B cell (primary cell): ENCODE measurements at regions of chr1 and their contacts with region 1.

Region 1: DNA sequence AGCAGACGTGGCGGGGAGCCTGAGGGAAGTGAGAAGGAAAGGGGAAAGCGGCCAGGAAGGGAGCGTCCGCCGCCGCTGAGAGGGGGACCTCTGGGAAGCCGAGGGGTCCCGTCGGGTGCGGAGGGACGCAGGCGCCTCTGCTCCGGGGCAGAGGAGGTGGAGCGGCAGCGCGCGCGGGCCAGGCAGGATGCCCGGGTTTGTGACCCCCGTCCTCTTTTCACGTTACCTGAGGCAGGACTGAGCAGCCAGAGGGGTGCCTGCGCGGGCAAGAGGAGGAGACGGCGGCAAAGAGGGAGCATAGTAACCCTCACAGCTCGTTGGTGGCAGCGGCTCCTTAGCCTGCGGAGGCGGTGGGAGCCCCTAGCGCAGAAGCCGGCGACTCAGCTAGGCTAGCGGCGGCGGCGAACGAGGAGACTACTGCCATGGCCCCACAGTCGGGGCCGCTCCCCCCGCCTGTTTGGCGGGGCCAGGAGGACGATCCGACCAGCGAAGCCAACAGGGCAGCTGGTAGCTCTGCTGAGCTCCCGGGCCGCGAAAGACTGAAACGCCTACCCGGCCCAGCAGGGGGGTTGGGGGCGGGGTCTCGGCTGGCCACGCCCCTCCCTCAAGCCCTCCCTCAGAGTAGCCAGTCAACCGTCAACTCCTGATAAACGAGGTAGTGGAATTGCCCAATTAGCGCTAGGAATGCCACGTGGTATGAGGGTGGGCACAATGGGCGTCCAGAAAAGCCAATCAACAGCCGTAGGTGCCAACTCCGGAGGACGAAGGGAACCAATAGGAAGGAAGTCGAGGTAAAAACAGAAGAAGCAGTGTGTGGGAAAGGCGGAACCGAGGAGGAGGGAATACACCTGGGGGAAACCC is at the start of gene TESK2:
- DNase-seq: peak; percentile 99
- ATAC-seq: peak; percentile 88
- H3K4me3 ChIP-seq: peak within 1 kb of the TSS; percentile 67 to 88 (median 83)
- H3K4me3 Mint-ChIP-seq: no peak within 1 kb of the TSS
- H3K27ac ChIP-seq: peak within 1 kb of the TSS; percentile 60 to 80
- H3K27ac Mint-ChIP-seq: no peak within 1 kb of the TSS
- H3K4me1 ChIP-seq: peaks cover 28% of the 10 kb centered on the region in 2 donors
- H3K4me1 Mint-ChIP-seq: peaks cover 22% of the 10 kb centered on the region
- H3K27me3 ChIP-seq: no peaks in the 10 kb centered on the region
- H3K27me3 Mint-ChIP-seq: no peaks in the 10 kb centered on the region
- CTCF ChIP-seq: peak; percentile 7
- total RNA-seq, gene TESK2: 26.2 and 27.0 TPM in 2 replicates

Region 2: GRCh38 chr1:44354840-44355581 is 1135.8 kb before region 1 on chr1 and contains the start of gene ERI3:
- CTCF ChIA-PET with region 1: no interaction called
- POLR2A ChIA-PET with region 1: no interaction called
- intact Hi-C with region 1: loop called (anchors 5 kb)
- DNase-seq: peak; percentile 96
- ATAC-seq: peak; percentile 100
- H3K4me3 ChIP-seq: peak within 1 kb of the TSS; percentile 12 to 88 (median 69)
- H3K4me3 Mint-ChIP-seq: peak within 1 kb of the TSS; percentile 92
- H3K27ac ChIP-seq: peak within 1 kb of the TSS in 1 of 2 donors; percentile 80
- H3K27ac Mint-ChIP-seq: peak within 1 kb of the TSS; percentile 92
- H3K4me1 ChIP-seq: peaks cover 7 to 14% of the 10 kb centered on the region in 2 donors
- H3K4me1 Mint-ChIP-seq: peaks cover 27% of the 10 kb centered on the region
- H3K27me3 ChIP-seq: no peaks in the 10 kb centered on the region
- H3K27me3 Mint-ChIP-seq: no peaks in the 10 kb centered on the region
- CTCF ChIP-seq: no peak
- total RNA-seq, gene ERI3: 36.3 and 37.5 TPM in 2 replicates

Region 3: GRCh38 chr1:44777979-44778635 is 712.7 kb before region 1 on chr1:
- CTCF ChIA-PET with region 1: no interaction called
- POLR2A ChIA-PET with region 1: no interaction called
- intact Hi-C with region 1: no loop called
- DNase-seq: no peak
- ATAC-seq: no peak
- H3K4me3 ChIP-seq: no peak overlapping the region
- H3K4me3 Mint-ChIP-seq: no peak overlapping the region
- H3K27ac ChIP-seq: no peak overlapping the region
- H3K27ac Mint-ChIP-seq: peak overlapping the region; percentile 94
- H3K4me1 ChIP-seq: peaks cover 14 to 29% of the 10 kb centered on the region in 2 donors
- H3K4me1 Mint-ChIP-seq: peaks cover 40% of the 10 kb centered on the region
- H3K27me3 ChIP-seq: no peaks in the 10 kb centered on the region
- H3K27me3 Mint-ChIP-seq: no peaks in the 10 kb centered on the region
- CTCF ChIP-seq: no peak

Region 4: GRCh38 chr1:44799770-44800584 is 690.9 kb before region 1 on chr1 and contains the start of gene PLK3:
- CTCF ChIA-PET with region 1: interaction called, 3 read pairs
- POLR2A ChIA-PET with region 1: no interaction called
- intact Hi-C with region 1: loop called (anchors 2 kb)
- DNase-seq: peak; percentile 99
- ATAC-seq: peak; percentile 89
- H3K4me3 ChIP-seq: peak within 1 kb of the TSS; percentile 61 to 88 (median 85)
- H3K4me3 Mint-ChIP-seq: peak within 1 kb of the TSS; percentile 99
- H3K27ac ChIP-seq: peak within 1 kb of the TSS; percentile 84 to 93
- H3K27ac Mint-ChIP-seq: peak within 1 kb of the TSS; percentile 100
- H3K4me1 ChIP-seq: peaks cover 16 to 38% of the 10 kb centered on the region in 2 donors
- H3K4me1 Mint-ChIP-seq: peaks cover 33% of the 10 kb centered on the region
- H3K27me3 ChIP-seq: no peaks in the 10 kb centered on the region
- H3K27me3 Mint-ChIP-seq: no peaks in the 10 kb centered on the region
- CTCF ChIP-seq: peak; percentile 85
- total RNA-seq, gene PLK3: 30.1 and 35.9 TPM in 2 replicates

Region 5: GRCh38 chr1:45339789-45340570 is 150.9 kb before region 1 on chr1 and contains the starts of genes MUTYH and TOE1:
- CTCF ChIA-PET with region 1: interaction called, 74 read pairs
- POLR2A ChIA-PET with region 1: interaction called, 33 read pairs
- intact Hi-C with region 1: loop called (anchors 1 kb)
- DNase-seq: peak; percentile 92
- ATAC-seq: peak; percentile 88
- H3K4me3 ChIP-seq: peak within 1 kb of the TSS; percentile 83 to 97 (median 86)
- H3K4me3 Mint-ChIP-seq: peak within 1 kb of the TSS; percentile 91
- H3K27ac ChIP-seq: peak within 1 kb of the TSS; percentile 96
- H3K27ac Mint-ChIP-seq: peak within 1 kb of the TSS; percentile 100
- H3K4me1 ChIP-seq: peaks cover 20 to 33% of the 10 kb centered on the region in 2 donors
- H3K4me1 Mint-ChIP-seq: peaks cover 38% of the 10 kb centered on the region
- H3K27me3 ChIP-seq: no peaks in the 10 kb centered on the region
- H3K27me3 Mint-ChIP-seq: no peaks in the 10 kb centered on the region
- CTCF ChIP-seq: no peak
- total RNA-seq, gene MUTYH: 68.1 and 68.5 TPM in 2 replicates
- total RNA-seq, gene TOE1: 21.9 and 24.7 TPM in 2 replicates

Region 6: DNA sequence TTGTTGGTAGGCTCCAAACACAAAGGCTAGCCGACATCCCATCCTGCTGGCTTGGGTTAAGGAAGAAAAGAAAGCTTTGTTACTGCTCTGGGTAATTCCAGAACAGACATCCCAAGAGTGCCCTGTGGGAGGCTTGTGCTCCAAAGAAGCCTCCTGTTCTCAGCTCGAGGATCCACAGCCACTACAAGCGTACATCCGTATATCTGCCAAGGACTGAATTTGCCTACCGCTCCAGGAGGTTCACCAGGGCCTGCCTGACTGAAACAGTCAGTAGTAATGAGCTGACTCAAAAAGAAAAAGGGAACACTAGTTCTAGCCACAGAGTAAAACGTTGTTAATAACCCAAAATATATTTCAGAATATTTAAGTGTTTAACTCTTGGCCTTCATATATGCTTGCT is 125.8 kb before region 1 on chr1:
- CTCF ChIA-PET with region 1: interaction called, 478 read pairs
- POLR2A ChIA-PET with region 1: interaction called, 22 read pairs
- intact Hi-C with region 1: no loop called
- DNase-seq: no peak
- ATAC-seq: no peak
- H3K4me3 ChIP-seq: no peak overlapping the region
- H3K4me3 Mint-ChIP-seq: no peak overlapping the region
- H3K27ac ChIP-seq: no peak overlapping the region
- H3K27ac Mint-ChIP-seq: peak overlapping the region; percentile 54
- H3K4me1 ChIP-seq: peaks cover 5 to 6% of the 10 kb centered on the region in 2 donors
- H3K4me1 Mint-ChIP-seq: peaks cover 21% of the 10 kb centered on the region
- H3K27me3 ChIP-seq: no peaks in the 10 kb centered on the region
- H3K27me3 Mint-ChIP-seq: no peaks in the 10 kb centered on the region
- CTCF ChIP-seq: no peak

Region 7: DNA sequence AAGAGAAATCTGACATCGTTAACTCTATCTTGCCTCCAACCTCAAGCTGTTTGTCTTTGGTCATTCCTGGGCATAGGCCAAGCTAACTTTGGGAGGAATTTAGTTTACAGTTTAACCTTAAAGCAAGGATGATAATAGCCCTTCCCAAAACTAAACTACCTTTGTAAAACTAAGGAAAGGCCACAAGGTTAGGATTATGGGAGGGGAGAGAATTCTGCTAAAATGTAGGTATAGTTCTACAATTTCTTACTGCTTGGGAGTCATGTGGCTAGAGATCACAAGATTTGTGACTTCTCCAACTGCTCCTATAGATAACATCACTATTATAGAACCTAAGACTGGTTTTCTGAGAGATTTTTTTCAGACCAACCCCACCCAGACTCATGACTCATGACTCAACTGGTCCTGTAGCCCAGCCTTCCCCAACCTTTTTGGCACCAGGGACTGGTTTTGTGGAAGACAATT is 80.0 kb before region 1 on chr1:
- CTCF ChIA-PET with region 1: interaction called, 94 read pairs
- POLR2A ChIA-PET with region 1: interaction called, 5 read pairs
- intact Hi-C with region 1: loop called (anchors 1 kb)
- DNase-seq: no peak
- ATAC-seq: no peak
- H3K4me3 ChIP-seq: no peak overlapping the region
- H3K4me3 Mint-ChIP-seq: peak overlapping the region; percentile 44
- H3K27ac ChIP-seq: peak overlapping the region in 1 of 2 donors; percentile 88
- H3K27ac Mint-ChIP-seq: peak overlapping the region; percentile 86
- H3K4me1 ChIP-seq: peaks cover 60 to 61% of the 10 kb centered on the region in 2 donors
- H3K4me1 Mint-ChIP-seq: peaks cover 72% of the 10 kb centered on the region
- H3K27me3 ChIP-seq: no peaks in the 10 kb centered on the region
- H3K27me3 Mint-ChIP-seq: no peaks in the 10 kb centered on the region
- CTCF ChIP-seq: no peak

Region 8: GRCh38 chr1:45569962-45570581 is 79.2 kb after region 1 on chr1:
- CTCF ChIA-PET with region 1: interaction called, 38 read pairs
- POLR2A ChIA-PET with region 1: no interaction called
- intact Hi-C with region 1: no loop called
- DNase-seq: peak; percentile 85
- ATAC-seq: peak; percentile 97
- H3K4me3 ChIP-seq: no peak overlapping the region
- H3K4me3 Mint-ChIP-seq: no peak overlapping the region
- H3K27ac ChIP-seq: peak overlapping the region in 1 of 2 donors; percentile 0
- H3K27ac Mint-ChIP-seq: peak overlapping the region; percentile 56
- H3K4me1 ChIP-seq: no peaks in the 10 kb centered on the region
- H3K4me1 Mint-ChIP-seq: peaks cover 2% of the 10 kb centered on the region
- H3K27me3 ChIP-seq: no peaks in the 10 kb centered on the region
- H3K27me3 Mint-ChIP-seq: no peaks in the 10 kb centered on the region
- CTCF ChIP-seq: peak; percentile 99